SK-N-SH (cell line): ENCODE measurements at regions of chr2 and their contacts with region 1.

Region 1: DNA sequence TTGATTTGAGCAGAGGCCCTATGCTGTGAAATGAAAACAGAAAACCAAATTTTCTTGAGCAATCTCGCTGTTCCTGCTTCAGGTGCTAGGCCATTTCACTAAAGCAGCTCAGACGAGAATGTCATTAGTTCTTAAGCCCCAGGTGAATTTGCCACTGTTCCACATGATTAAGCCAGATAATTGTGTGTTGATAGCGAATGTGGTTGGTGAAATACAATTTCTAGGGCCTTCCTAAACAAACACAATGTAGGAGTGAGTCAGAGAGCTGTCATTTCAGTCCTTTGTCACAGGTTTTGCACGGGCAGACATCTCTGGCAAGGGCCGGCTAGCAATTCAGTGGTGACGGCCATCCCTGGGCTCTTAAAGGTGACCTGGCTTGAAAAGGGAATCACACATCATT is 170.6 kb downstream of the TMEM182 start:
- DNase-seq: no peak
- H3K4me3 ChIP-seq: no peak overlapping the region
- H3K27ac ChIP-seq: no peak overlapping the region
- H3K4me1 ChIP-seq: no peaks in the 10 kb centered on the region; a peak in 1 of 4 replicates
- H3K27me3 ChIP-seq: no peaks in the 10 kb centered on the region
- CTCF ChIP-seq: no peak
- EP300 ChIP-seq: no peak
- RAD21 ChIP-seq: no peak

Region 2: GRCh38 chr2:102950371-102950946 is 18.0 kb after region 1 on chr2:
- CTCF ChIA-PET with region 1: interaction called, 11 read pairs
- POLR2A ChIA-PET with region 1: no interaction called
- DNase-seq: no peak
- H3K4me3 ChIP-seq: no peak overlapping the region
- H3K27ac ChIP-seq: peak overlapping the region in 1 of 2 experiments; percentile 50; a peak in 1 of 4 replicates
- H3K4me1 ChIP-seq: peaks cover 0 to 9% of the 10 kb centered on the region in 2 experiments; a peak in 1 of 4 replicates
- H3K27me3 ChIP-seq: no peaks in the 10 kb centered on the region
- CTCF ChIP-seq: no peak
- EP300 ChIP-seq: no peak
- RAD21 ChIP-seq: no peak